Body of pancreas (tissue), 4 donors: ENCODE measurements at regions of chr14 and their contacts with region 1.

Region 1: DNA sequence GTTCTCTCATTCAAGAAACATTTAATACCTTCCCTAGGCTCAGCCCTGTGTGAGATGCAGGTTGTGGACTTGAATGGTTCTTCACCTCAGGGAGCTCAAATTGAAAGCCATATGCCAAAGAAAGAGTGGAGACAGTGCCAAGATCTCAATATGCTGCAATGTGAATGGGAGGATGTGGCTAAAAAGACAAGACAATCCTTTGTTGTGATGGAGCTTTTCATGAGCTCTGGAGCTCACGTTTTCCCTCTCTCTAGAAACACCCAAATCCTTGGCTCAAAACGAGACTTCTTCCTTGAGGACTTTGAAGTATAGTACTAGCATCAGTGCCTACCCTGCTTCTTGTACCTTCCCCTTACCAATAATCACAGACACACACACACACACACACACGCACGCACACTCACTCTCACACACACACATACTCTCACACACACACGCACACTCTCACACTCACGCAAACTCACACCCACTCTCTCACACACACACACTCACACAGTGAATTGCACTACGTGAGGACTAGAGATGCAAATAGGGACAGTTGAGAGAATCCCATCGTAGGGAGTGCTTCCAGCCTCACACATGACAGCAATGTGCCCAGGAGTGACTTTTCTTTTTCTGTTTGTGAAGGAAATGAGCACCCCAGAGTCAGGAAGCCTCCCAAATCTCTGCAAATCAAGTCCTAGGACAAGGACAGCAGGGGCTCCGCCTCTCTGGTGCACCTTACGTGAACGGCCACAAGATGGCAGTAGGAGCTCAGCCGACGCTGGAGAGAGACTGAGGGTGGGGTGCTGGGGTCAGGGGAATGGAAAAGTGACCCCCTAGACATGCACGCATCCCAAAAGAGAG is 231.4 kb downstream of the PCNX1 start:
- DNase-seq: peak; percentile 50 to 56 (median 52)
- ATAC-seq: peak; percentile 56
- H3K4me3 ChIP-seq: no peak overlapping the region
- H3K27ac ChIP-seq: no peak overlapping the region
- H3K4me1 ChIP-seq: peaks cover 3% of the 10 kb centered on the region
- H3K27me3 ChIP-seq: no peaks in the 10 kb centered on the region
- CTCF ChIP-seq: peak; percentile 79 to 91 (median 88)
- POLR2A ChIP-seq: no peak

Region 2: DNA sequence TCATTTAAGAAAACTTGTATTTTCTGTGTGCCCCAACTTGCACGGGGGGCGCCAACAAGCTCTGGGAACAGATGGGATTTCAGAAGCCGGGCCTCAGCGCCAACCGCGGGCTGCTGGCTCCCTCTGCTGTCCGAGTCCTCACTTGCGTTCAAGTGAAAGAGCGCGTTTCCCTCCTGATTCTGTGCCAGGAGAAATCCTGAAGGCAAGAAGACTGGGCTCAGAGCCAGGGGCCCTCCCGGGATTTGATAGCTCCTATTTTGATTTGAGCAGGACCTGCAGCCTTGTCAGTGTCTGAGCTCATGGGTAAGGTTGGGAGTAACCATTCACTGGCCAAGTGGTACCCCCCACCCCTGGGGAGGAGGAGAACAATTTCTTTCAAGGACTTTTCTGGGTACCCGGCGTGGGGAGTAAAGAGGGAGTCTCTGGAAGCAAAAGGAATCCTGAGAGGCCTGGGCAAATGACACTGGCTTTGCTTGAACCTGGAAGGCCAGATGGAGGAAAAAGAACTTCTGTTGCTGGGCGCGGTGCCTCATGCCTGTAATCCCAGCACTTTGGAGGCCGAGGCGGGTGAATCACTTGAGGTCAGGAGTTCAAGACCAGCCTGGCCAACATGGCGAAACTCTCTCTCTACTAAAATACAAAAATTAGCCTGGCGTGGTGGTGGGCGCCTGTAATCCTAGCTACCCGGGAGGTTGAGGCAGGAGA is 614.6 kb after region 1 on chr14:
- intact Hi-C with region 1: loop called (anchors 5 kb)
- DNase-seq: peak; percentile 84 to 91 (median 88)
- ATAC-seq: peak; percentile 70
- H3K4me3 ChIP-seq: no peak overlapping the region
- H3K27ac ChIP-seq: no peak overlapping the region
- H3K4me1 ChIP-seq: peaks cover 8% of the 10 kb centered on the region
- H3K27me3 ChIP-seq: no peaks in the 10 kb centered on the region
- CTCF ChIP-seq: peak; percentile 73 to 94 (median 91)
- POLR2A ChIP-seq: no peak